CD8-positive, alpha-beta T cell (primary cell): ENCODE measurements at regions of chr14 and their contacts with region 1.

Region 1: DNA sequence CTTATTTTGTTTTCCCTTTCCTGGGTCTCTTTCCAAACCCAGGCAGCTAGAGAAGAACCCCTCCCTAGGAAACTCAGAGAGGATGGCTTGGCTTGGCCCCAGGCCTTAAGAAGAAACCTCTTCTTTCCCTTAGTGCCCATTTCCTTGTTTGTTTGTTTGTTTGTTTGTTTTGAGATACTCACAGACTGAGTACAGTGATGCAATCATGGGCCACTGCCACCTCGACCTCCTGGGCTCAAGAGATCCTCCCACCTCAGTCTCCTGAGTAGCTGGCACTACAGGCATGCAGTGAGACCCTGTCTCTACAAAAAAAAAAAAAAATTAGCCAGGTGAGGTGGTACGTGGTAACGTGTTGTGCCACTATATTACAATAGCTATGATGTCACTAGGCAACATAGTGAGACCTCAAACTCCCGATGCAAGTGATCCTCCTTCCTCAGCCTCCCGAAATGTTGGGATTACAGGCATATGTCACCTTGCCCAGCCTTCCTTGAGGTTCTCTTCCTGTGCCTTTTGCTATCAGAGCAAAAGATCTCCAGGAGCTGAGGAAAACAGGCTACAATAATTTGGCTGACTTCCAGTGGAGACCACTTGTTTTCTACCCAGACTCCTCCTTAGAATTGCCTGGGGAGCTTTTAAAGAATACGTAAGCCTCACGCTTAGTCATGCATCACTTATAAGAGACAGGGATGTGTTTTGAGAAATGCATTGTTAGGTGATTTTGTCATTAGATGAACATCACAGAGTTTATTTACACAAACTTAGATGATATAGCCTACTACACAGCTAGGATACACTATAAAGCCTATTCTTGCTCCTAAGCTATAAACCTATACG is 34.5 kb upstream of the LGALS3 start:
- DNase-seq: no peak
- ATAC-seq: no peak
- H3K4me3 ChIP-seq: no peak overlapping the region
- H3K4me3 Mint-ChIP-seq: no peak overlapping the region
- H3K27ac ChIP-seq: no peak overlapping the region
- H3K27ac Mint-ChIP-seq: no peak overlapping the region
- H3K4me1 ChIP-seq: peaks cover 12% of the 10 kb centered on the region
- H3K4me1 Mint-ChIP-seq: peaks cover 16% of the 10 kb centered on the region
- H3K27me3 ChIP-seq: no peaks in the 10 kb centered on the region
- H3K27me3 Mint-ChIP-seq: no peaks in the 10 kb centered on the region
- CTCF ChIP-seq: no peak

Region 2: GRCh38 chr14:55160989-55161388 is 66.5 kb after region 1 on chr14:
- CTCF ChIA-PET with region 1: interaction called, 109 read pairs
- POLR2A ChIA-PET with region 1: no interaction called
- intact Hi-C with region 1: loop called (anchors 1 kb)
- DNase-seq: peak in 2 of 9 experiments; percentile 57 to 69
- ATAC-seq: peak; percentile 88
- H3K4me3 ChIP-seq: no peak overlapping the region
- H3K4me3 Mint-ChIP-seq: no peak overlapping the region
- H3K27ac ChIP-seq: no peak overlapping the region
- H3K27ac Mint-ChIP-seq: no peak overlapping the region
- H3K4me1 ChIP-seq: no peaks in the 10 kb centered on the region
- H3K4me1 Mint-ChIP-seq: peaks cover 4% of the 10 kb centered on the region
- H3K27me3 ChIP-seq: no peaks in the 10 kb centered on the region
- H3K27me3 Mint-ChIP-seq: no peaks in the 10 kb centered on the region
- CTCF ChIP-seq: peak; percentile 68

Region 3: GRCh38 chr14:55245657-55246268 is 151.2 kb after region 1 on chr14:
- CTCF ChIA-PET with region 1: no interaction called
- POLR2A ChIA-PET with region 1: no interaction called
- intact Hi-C with region 1: loop called in 1 of 2 experiments (anchors 1 kb)
- DNase-seq: peak in 5 of 9 experiments; percentile 7 to 66 (median 32)
- ATAC-seq: peak; percentile 52
- H3K4me3 ChIP-seq: no peak overlapping the region
- H3K4me3 Mint-ChIP-seq: no peak overlapping the region
- H3K27ac ChIP-seq: no peak overlapping the region
- H3K27ac Mint-ChIP-seq: no peak overlapping the region
- H3K4me1 ChIP-seq: no peaks in the 10 kb centered on the region
- H3K4me1 Mint-ChIP-seq: no peaks in the 10 kb centered on the region
- H3K27me3 ChIP-seq: no peaks in the 10 kb centered on the region
- H3K27me3 Mint-ChIP-seq: peaks cover 13% of the 10 kb centered on the region
- CTCF ChIP-seq: peak; percentile 61